CD14-positive monocyte (primary cell): ENCODE measurements at regions of chr12 and their contacts with region 1.

Region 1: GRCh38 chr12:55926738-55927587 is 731 bp downstream of the PYM1 start:
- DNase-seq: peak; percentile 86 to 89 (median 88)
- H3K4me3 ChIP-seq: peak overlapping the region; percentile 65 to 93 (median 91)
- H3K4me3 Mint-ChIP-seq: peak overlapping the region; percentile 96 to 98
- H3K27ac ChIP-seq: peak overlapping the region; percentile 85 to 92
- H3K27ac Mint-ChIP-seq: peak overlapping the region; percentile 95 to 99 (median 97)
- H3K4me1 ChIP-seq: peaks cover 46 to 51% of the 10 kb centered on the region in 2 donors
- H3K4me1 Mint-ChIP-seq: peaks cover 53% of the 10 kb centered on the region
- H3K27me3 ChIP-seq: no peaks in the 10 kb centered on the region
- H3K27me3 Mint-ChIP-seq: peaks cover 0 to 3% (median 1%) of the 10 kb centered on the region in 3 donors
- CTCF ChIP-seq: peak; percentile 78

Region 2: DNA sequence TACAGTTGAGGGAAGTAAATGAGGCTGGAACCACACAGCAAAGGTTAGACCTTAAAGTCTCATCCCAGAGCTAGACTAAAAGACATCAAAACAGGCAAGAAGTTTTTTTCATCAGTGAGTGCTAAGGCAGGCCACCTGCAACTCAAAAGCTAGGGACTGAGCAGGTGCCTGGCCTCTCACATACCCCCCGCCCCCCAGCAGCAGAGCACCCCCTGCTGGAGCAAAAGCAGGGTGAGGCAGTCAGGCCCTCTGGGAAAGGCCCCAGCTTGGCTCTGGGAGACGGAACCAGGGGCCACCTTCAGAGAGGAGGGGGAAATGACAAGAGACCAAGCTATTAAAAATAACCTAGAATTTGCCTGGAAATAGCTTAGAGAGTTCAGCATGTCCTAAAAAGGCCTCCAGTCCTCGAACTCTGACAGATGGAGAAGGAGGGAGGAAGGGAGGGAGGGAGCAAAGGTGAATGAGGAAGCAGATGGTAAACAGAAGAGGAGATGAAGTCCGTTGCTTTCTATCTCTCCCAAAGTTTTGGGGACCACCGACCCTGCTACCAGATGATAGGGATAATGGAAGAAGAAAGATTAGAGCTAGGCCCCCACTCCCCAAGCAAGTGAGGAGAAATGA is 221.1 kb before region 1 on chr12:
- intact Hi-C with region 1: no loop called
- DNase-seq: no peak
- H3K4me3 ChIP-seq: no peak overlapping the region
- H3K4me3 Mint-ChIP-seq: peak overlapping the region in 1 of 2 donors; percentile 84
- H3K27ac ChIP-seq: no peak overlapping the region
- H3K27ac Mint-ChIP-seq: peak overlapping the region in 1 of 7 donors; percentile 10
- H3K4me1 ChIP-seq: peaks cover 27 to 30% of the 10 kb centered on the region in 2 donors
- H3K4me1 Mint-ChIP-seq: peaks cover 41% of the 10 kb centered on the region
- H3K27me3 ChIP-seq: peaks cover 18 to 40% of the 10 kb centered on the region in 2 donors
- H3K27me3 Mint-ChIP-seq: peaks cover 42 to 64% (median 51%) of the 10 kb centered on the region in 3 donors
- CTCF ChIP-seq: peak; percentile 23

Region 3: DNA sequence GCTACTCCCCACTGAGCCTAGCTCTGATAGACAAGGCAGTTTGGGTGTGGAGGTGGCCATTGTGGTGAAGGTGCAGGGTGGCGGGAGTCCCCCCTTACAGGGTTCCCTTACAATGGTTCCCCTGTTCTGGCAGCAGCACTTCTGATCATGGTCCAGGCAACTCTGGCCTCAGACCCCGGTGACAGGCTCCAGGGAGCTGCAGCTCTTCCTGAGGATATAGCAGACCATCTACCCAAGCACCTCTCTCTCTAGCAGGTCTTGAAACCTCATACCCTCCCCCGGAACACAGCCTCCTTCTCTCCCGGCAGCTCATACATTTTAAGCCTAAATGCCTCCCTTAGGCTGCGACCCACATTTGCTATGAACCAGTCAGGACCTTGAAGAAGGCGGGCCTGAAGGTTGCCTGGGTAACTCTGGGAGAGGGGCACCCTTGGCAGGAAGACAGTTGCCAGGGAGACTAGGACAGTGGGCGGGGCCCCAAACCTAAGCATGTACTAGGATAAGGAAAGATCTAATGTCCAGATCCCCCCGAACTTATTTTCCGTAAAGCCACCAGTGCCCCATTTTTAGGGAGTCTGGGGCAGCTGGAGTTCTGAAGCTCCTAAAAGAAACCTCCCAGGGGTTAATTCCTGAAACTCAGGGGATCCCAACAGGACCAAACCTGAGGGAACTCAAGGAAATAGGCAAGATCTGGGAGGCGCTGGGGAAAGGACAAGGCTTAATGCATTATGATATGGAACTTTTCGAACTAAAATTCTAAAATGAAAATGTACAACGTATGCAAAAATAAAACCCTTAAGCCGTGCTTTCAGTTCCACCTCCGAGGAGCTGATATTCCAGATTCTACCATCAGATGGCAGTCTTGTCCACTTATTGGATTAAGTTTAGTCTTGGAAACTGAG is 188.6 kb before region 1 on chr12:
- intact Hi-C with region 1: loop called in 1 of 2 experiments (anchors 5 kb)
- DNase-seq: peak; percentile 64 to 82 (median 66)
- H3K4me3 ChIP-seq: peak overlapping the region; percentile 57 to 95 (median 82)
- H3K4me3 Mint-ChIP-seq: peak overlapping the region; percentile 85 to 92
- H3K27ac ChIP-seq: peak overlapping the region; percentile 33 to 65
- H3K27ac Mint-ChIP-seq: peak overlapping the region; percentile 70 to 90 (median 80)
- H3K4me1 ChIP-seq: peaks cover 16 to 24% of the 10 kb centered on the region in 2 donors
- H3K4me1 Mint-ChIP-seq: peaks cover 30% of the 10 kb centered on the region
- H3K27me3 ChIP-seq: peaks cover 9 to 12% of the 10 kb centered on the region in 2 donors
- H3K27me3 Mint-ChIP-seq: peaks cover 20 to 24% (median 22%) of the 10 kb centered on the region in 3 donors
- CTCF ChIP-seq: peak; percentile 90

Region 4: GRCh38 chr12:55817346-55818139 is 109.4 kb before region 1 on chr12 and contains the starts of genes ORMDL2 and SARNP:
- intact Hi-C with region 1: loop called in 1 of 2 experiments (anchors 5 kb)
- DNase-seq: peak; percentile 99 to 100 (median 100)
- H3K4me3 ChIP-seq: peak within 1 kb of the TSS; percentile 78 to 100 (median 99)
- H3K4me3 Mint-ChIP-seq: no peak within 1 kb of the TSS
- H3K27ac ChIP-seq: peak within 1 kb of the TSS; percentile 53 to 97
- H3K27ac Mint-ChIP-seq: no peak within 1 kb of the TSS
- H3K4me1 ChIP-seq: peaks cover 19 to 32% of the 10 kb centered on the region in 2 donors
- H3K4me1 Mint-ChIP-seq: peaks cover 23% of the 10 kb centered on the region
- H3K27me3 ChIP-seq: no peaks in the 10 kb centered on the region
- H3K27me3 Mint-ChIP-seq: no peaks in the 10 kb centered on the region
- CTCF ChIP-seq: no peak
- polyA plus RNA-seq, gene ORMDL2: 15.5 to 140 (median 137) TPM
- polyA plus RNA-seq, gene SARNP: 28.9 to 139 (median 98.6) TPM

Region 5: GRCh38 chr12:55829967-55830600 is 96.9 kb before region 1 on chr12:
- intact Hi-C with region 1: loop called in 1 of 2 experiments (anchors 2 kb)
- DNase-seq: peak in 1 of 3 donors; percentile 11
- H3K4me3 ChIP-seq: peak overlapping the region; percentile 80 to 97 (median 89)
- H3K4me3 Mint-ChIP-seq: peak overlapping the region; percentile 96
- H3K27ac ChIP-seq: peak overlapping the region; percentile 73 to 87
- H3K27ac Mint-ChIP-seq: peak overlapping the region; percentile 89 to 96 (median 94)
- H3K4me1 ChIP-seq: peaks cover 47 to 54% of the 10 kb centered on the region in 2 donors
- H3K4me1 Mint-ChIP-seq: peaks cover 52% of the 10 kb centered on the region
- H3K27me3 ChIP-seq: no peaks in the 10 kb centered on the region
- H3K27me3 Mint-ChIP-seq: peaks cover 0 to 2% (median 0%) of the 10 kb centered on the region in 3 donors
- CTCF ChIP-seq: no peak

Region 6: GRCh38 chr12:55966408-55967281 is 39.7 kb after region 1 on chr12 and contains the start of gene CDK2:
- intact Hi-C with region 1: loop called (anchors 5 kb)
- DNase-seq: peak; percentile 64 to 77 (median 66)
- H3K4me3 ChIP-seq: peak within 1 kb of the TSS; percentile 78 to 96 (median 88)
- H3K4me3 Mint-ChIP-seq: peak within 1 kb of the TSS; percentile 91 to 94
- H3K27ac ChIP-seq: peak within 1 kb of the TSS; percentile 20 to 63
- H3K27ac Mint-ChIP-seq: peak within 1 kb of the TSS; percentile 78 to 95 (median 90)
- H3K4me1 ChIP-seq: peaks cover 15 to 22% of the 10 kb centered on the region in 2 donors
- H3K4me1 Mint-ChIP-seq: peaks cover 23% of the 10 kb centered on the region
- H3K27me3 ChIP-seq: no peaks in the 10 kb centered on the region
- H3K27me3 Mint-ChIP-seq: peaks cover 0 to 2% (median 2%) of the 10 kb centered on the region in 3 donors
- CTCF ChIP-seq: no peak
- polyA plus RNA-seq, gene CDK2: 4.1 to 11.8 (median 4.7) TPM

Region 7: DNA sequence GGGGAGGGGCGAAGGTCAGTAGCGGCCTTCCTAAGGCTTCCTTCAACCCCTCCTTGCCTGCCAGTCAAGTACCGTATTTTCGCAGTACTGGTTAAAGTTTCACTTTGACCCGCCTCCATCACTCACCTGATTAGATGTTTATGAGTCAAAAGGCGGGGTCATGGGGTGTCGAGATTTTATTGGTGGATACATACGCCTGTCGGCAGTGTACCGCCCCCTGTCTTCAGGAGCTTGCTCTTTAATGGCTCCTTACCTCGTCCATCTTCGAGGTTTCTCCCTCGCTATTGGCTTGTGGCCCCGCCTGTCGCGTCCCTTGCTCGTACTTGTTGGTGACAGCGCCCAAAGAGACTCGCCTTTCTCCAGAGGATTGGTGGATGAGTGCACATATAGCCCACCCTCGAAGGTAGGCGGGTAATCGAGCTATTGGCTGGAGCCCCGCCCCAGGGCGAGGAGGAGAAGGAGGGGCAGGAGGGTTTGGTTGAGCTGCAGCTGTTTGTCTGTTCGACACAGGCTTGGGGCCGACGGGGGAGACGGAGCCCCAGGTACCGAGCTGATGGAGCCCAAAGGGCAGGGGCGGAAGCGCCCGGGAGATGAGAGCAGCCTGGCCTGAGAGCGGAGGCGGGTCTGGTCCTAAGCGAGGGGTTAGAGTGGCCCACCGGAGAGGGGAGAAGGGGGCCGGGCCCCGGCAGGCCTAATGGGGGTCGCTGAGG is 46.8 kb after region 1 on chr12 and contains the start of gene RAB5B:
- intact Hi-C with region 1: loop called (anchors 5 kb)
- DNase-seq: peak; percentile 99 to 100 (median 100)
- H3K4me3 ChIP-seq: peak within 1 kb of the TSS; percentile 82 to 98 (median 92)
- H3K4me3 Mint-ChIP-seq: no peak within 1 kb of the TSS
- H3K27ac ChIP-seq: peak within 1 kb of the TSS; percentile 83 to 90
- H3K27ac Mint-ChIP-seq: no peak within 1 kb of the TSS
- H3K4me1 ChIP-seq: peaks cover 26 to 42% of the 10 kb centered on the region in 2 donors
- H3K4me1 Mint-ChIP-seq: peaks cover 24% of the 10 kb centered on the region
- H3K27me3 ChIP-seq: no peaks in the 10 kb centered on the region
- H3K27me3 Mint-ChIP-seq: peaks cover 0 to 2% (median 0%) of the 10 kb centered on the region in 3 donors
- CTCF ChIP-seq: no peak
- polyA plus RNA-seq, gene RAB5B: 44.0 to 63.0 (median 48.5) TPM